Psoas muscle (tissue), 8 donors: ENCODE measurements at regions of chr2 and their contacts with region 1.

Region 1: DNA sequence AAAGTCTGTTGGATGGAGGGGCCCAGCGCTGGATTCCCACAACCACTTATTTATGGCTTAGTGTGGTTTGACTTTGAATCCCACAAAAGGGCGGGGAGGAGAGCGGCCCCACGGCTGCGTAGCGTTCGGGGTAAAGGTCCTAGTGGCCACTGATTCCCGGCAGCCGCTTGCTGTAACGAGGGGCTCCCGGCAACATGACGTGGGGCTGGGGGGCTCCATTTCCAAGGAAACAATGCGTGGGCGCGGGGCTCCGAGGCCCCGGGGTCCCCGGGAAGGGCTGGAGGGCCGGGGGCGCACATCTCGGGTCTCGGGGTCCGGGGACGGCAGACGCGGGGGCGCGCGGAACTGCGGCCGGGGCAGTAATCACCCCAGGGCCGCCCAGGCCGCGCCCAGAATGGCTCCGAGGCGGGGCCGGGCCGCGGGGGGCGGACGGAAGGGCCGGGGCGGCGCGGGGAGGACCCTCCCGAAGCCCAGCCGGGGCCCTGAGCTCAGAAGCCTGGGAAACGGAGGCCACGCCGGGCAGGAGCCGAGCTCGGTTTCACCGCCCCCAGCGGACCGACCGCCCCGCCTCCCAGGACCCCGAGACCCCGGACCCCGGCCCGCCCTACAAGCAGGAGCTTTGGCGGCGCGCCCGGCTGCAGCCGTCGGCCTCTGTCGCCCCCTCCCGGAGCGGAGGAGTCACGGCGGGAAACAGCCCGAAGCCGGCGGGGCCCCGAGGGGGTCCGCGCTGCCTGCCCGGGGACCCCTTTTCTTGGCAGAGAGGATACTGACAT is 11.9 kb upstream of the MLPH start:
- DNase-seq: peak; percentile 85 to 93
- ATAC-seq: peak; percentile 78 to 87 (median 83)
- H3K4me3 ChIP-seq: peak overlapping the region; percentile 90
- H3K27ac ChIP-seq: peak overlapping the region; percentile 90
- H3K4me1 ChIP-seq: peaks cover 18% of the 10 kb centered on the region
- H3K27me3 ChIP-seq: peaks cover 0 to 8% (median 0%) of the 10 kb centered on the region in 3 donors
- CTCF ChIP-seq: peak; percentile 90

Region 2: DNA sequence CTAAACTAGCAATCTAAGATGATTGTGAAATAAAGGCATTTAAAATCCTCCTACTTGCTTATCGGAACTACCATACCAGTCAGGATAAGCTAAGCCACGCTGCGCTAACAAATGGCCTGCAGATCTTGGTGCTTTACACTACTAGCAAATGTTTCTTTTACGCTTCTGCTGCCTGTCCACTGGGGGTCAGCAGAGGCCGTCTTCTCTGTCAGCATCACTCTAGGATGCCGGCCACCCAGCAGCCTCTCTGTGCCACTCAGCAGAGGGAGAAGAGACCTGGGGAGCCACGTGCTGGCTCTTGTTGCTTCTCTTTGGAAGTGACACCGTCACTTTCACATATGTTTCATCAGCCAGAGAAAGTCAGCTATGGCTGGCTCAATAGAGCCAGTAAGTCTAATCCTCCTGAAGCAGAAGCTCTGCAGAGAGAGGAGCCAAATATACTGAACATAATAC is 352.9 kb before region 1 on chr2:
- intact Hi-C with region 1: loop called in 1 of 2 experiments (anchors 5 kb)
- DNase-seq: peak; percentile 69 to 87
- ATAC-seq: peak; percentile 78 to 90 (median 88)
- H3K4me3 ChIP-seq: no peak overlapping the region
- H3K27ac ChIP-seq: no peak overlapping the region
- H3K4me1 ChIP-seq: no peaks in the 10 kb centered on the region
- H3K27me3 ChIP-seq: no peaks in the 10 kb centered on the region
- CTCF ChIP-seq: peak; percentile 66

Region 3: DNA sequence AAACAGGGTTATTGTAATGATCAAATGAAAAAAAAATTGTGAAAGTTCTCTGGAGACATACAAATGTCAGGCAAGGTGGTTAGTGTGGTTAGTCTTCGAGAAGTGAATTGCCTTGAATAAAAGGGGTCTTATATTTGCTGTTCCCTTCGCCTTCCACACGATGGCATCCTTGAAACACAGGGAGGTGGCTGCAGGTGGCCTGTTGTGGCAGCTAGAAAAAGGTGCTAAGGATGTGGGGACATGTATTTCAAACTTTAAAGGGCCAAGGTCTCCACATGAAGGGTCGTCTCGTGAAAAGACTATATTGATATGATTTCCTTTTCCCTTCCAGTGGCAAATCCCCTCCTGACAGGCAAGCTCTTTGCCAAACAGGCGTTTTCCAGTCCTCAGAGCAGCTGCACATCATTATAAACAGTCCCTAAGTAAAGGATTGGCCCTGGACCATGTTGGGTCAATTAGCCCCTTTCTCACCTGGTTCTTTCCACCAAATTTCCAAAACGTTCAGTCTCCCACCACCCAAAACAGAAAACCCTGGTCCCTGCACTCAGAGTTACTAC is 321.0 kb before region 1 on chr2:
- intact Hi-C with region 1: loop called in 1 of 2 experiments (anchors 10 kb)
- DNase-seq: no peak
- ATAC-seq: peak in 3 of 4 donors; percentile 36 to 48 (median 45)
- H3K4me3 ChIP-seq: no peak overlapping the region
- H3K27ac ChIP-seq: no peak overlapping the region
- H3K4me1 ChIP-seq: peaks cover under 1% of the 10 kb centered on the region
- H3K27me3 ChIP-seq: no peaks in the 10 kb centered on the region
- CTCF ChIP-seq: peak; percentile 40

Region 4: DNA sequence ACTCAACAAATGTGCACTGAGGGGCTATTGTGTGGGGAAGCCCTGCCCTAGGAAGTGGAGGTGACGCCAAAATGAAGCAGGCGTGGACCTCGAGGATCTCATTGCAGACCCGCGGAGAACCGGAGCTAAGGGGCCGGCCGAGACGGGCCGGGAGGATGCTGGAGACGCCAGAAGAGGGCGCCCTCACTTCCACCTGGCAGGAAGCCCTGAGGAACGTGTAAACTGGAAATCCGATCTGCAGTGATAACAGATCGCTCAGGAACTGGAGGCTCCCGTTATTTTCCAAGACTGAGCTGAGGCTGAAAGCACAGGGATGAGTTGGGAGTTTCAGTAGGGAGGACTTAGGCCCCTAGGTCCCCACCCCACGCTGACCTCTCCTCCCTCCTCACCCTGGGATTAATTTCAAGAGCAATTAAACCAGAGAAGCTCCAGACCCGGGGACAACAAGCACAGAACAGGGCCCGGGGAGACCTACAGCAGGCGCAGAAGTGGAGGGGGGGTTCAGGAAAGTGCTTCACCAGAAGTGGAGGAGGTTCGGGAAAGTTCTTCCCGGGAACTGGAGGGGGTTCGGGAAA is 53.5 kb before region 1 on chr2:
- intact Hi-C with region 1: loop called (anchors 2 to 5 kb)
- DNase-seq: peak; percentile 84 to 92
- ATAC-seq: peak; percentile 94 to 98 (median 95)
- H3K4me3 ChIP-seq: peak overlapping the region; percentile 40
- H3K27ac ChIP-seq: peak overlapping the region; percentile 31
- H3K4me1 ChIP-seq: peaks cover 14% of the 10 kb centered on the region
- H3K27me3 ChIP-seq: no peaks in the 10 kb centered on the region
- CTCF ChIP-seq: peak; percentile 82